Activated CD4-positive, alpha-beta T cell treated with anti-CD3 and anti-CD28 coated beads, Interleukin-2, amount 10 ng/mL, durations not matched to agents 24 days and 14 days (primary cell): ENCODE measurements at regions of chr13 and their contacts with region 1.

Region 1: GRCh38 chr13:52652196-52652979 is at the start of gene SUGT1:
- DNase-seq: peak; percentile 98
- H3K4me3 Mint-ChIP-seq: no peak within 1 kb of the TSS
- H3K27ac Mint-ChIP-seq: no peak within 1 kb of the TSS
- H3K4me1 Mint-ChIP-seq: peaks cover 15% of the 10 kb centered on the region
- H3K27me3 Mint-ChIP-seq: no peaks in the 10 kb centered on the region
- total RNA-seq, gene SUGT1: 71.2 and 77.8 TPM in 2 replicates

Region 2: DNA sequence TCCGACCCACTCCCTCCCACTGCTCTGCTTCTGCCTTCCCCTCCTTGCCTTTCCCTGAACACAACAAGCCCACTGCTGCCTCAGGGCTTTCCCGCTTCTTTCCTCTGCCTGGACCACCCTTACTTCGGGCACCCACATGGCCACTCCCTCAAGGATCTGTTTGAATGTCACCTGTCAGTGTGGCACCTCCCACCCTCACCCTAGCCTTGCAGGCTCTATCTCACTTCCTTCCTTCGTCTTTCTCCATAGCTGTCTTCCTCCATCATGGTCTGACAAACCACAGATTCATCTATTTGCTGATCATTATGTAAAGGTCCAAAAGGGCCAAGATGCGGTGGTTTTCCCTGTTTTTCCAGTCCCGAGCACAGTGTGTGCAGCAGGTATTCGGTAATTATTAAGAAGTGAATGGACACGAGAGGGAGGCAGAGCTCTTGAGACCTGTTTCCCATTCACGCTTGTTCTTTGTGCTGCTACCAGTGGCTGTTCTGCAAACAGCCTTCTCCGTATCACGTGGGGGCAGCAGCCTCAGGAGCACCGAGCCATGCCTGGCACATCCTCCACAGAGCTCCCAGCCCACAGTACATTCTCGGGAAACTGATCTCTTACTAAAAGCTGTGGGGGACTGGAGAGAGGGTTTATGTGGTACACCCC is 740.4 kb before region 1 on chr13:
- intact Hi-C with region 1: no loop called
- DNase-seq: no peak
- H3K4me3 Mint-ChIP-seq: no peak overlapping the region
- H3K27ac Mint-ChIP-seq: no peak overlapping the region
- H3K4me1 Mint-ChIP-seq: peaks cover 28% of the 10 kb centered on the region
- H3K27me3 Mint-ChIP-seq: peaks cover 3% of the 10 kb centered on the region

Region 3: GRCh38 chr13:52011632-52012511 is 640.5 kb before region 1 on chr13 and contains the start of gene ALG11:
- intact Hi-C with region 1: loop called (anchors 5 kb)
- DNase-seq: peak; percentile 100
- H3K4me3 Mint-ChIP-seq: peak within 1 kb of the TSS; percentile 99
- H3K27ac Mint-ChIP-seq: peak within 1 kb of the TSS; percentile 93
- H3K4me1 Mint-ChIP-seq: peaks cover 8% of the 10 kb centered on the region
- H3K27me3 Mint-ChIP-seq: peaks cover 34% of the 10 kb centered on the region
- total RNA-seq, gene ALG11: 26.7 and 28.0 TPM in 2 replicates

Region 4: GRCh38 chr13:52411629-52412028 is 240.8 kb before region 1 on chr13:
- intact Hi-C with region 1: no loop called
- DNase-seq: no peak
- H3K4me3 Mint-ChIP-seq: no peak overlapping the region
- H3K27ac Mint-ChIP-seq: no peak overlapping the region
- H3K4me1 Mint-ChIP-seq: peaks cover 2% of the 10 kb centered on the region
- H3K27me3 Mint-ChIP-seq: no peaks in the 10 kb centered on the region

Region 5: DNA sequence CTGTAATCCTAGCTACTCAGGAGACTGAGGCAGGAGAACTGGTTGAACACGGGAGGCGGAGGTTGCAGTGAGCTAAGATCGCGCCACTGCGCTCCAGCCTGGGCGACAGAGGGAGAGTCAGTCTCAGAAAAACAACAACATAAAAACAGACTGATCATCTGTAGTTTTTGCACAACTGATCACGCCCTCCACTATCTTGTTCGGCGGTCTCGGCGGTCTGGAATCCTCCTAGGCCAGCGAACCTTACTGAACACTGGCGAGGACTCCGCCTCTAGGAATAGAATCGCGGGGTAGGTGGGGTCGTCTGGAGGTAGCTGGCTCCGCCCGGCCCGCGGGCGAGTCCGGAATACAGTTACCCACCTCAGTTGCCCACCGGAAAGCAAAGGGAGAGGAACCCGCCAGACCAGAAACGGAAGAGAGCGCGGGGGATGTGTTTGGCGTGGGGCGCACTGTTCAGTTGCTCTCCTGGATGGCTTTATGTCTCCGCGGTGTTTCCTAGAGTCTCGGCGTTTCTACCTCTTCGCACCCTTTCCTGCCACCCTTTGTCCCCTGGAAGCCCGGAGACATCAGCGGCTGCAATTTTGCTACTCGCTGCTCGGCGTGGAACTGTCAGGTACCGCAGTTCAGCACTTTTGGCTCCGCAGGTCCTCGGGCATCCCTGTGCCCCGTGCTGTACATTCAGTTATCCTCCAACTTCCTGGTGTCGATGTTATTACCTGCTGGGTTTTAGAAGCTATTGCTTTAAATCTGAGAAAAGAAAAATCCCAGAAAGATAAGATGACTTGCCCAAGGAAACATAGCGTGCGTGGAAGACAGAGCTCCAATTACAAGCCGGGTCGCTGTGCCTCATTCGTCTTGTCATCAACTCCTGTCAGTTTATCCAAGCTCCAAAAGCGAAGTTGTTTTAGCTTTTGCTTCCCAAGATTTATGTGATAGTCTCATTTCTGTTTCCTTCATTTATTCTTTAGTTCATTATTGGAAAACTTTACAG is 35.0 kb before region 1 on chr13:
- intact Hi-C with region 1: loop called (anchors 1 kb)
- DNase-seq: peak; percentile 95
- H3K4me3 Mint-ChIP-seq: peak overlapping the region; percentile 94
- H3K27ac Mint-ChIP-seq: peak overlapping the region; percentile 94
- H3K4me1 Mint-ChIP-seq: peaks cover 14% of the 10 kb centered on the region
- H3K27me3 Mint-ChIP-seq: peaks cover 9% of the 10 kb centered on the region

Region 6: DNA sequence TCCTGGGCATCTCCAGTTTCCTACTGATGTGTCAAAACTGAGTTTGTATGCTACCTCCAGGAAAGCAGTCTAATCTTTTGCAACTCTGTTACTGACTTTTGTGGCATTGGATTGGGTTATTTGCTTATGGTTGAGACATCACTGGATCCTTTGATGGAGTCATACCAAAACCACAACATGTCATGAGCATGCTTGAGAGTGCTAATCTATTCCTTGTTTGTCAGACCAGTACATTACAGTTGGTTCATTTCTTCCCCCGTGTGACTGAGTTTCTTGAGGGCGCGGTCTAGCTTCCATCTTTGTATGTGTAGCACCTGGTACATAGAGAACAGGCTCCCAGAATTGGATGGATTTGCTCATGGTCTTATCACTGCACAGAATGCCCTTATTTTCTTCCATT is 43.5 kb after region 1 on chr13:
- intact Hi-C with region 1: loop called (anchors 1 kb)
- DNase-seq: peak; percentile 70
- H3K4me3 Mint-ChIP-seq: no peak overlapping the region
- H3K27ac Mint-ChIP-seq: peak overlapping the region; percentile 78
- H3K4me1 Mint-ChIP-seq: peaks cover 13% of the 10 kb centered on the region
- H3K27me3 Mint-ChIP-seq: no peaks in the 10 kb centered on the region

Region 7: GRCh38 chr13:52809310-52809769 is 157.0 kb after region 1 on chr13:
- intact Hi-C with region 1: loop called (anchors 5 kb)
- DNase-seq: peak; percentile 82
- H3K4me3 Mint-ChIP-seq: no peak overlapping the region
- H3K27ac Mint-ChIP-seq: no peak overlapping the region
- H3K4me1 Mint-ChIP-seq: peaks cover 4% of the 10 kb centered on the region
- H3K27me3 Mint-ChIP-seq: peaks cover 2% of the 10 kb centered on the region

Region 8: DNA sequence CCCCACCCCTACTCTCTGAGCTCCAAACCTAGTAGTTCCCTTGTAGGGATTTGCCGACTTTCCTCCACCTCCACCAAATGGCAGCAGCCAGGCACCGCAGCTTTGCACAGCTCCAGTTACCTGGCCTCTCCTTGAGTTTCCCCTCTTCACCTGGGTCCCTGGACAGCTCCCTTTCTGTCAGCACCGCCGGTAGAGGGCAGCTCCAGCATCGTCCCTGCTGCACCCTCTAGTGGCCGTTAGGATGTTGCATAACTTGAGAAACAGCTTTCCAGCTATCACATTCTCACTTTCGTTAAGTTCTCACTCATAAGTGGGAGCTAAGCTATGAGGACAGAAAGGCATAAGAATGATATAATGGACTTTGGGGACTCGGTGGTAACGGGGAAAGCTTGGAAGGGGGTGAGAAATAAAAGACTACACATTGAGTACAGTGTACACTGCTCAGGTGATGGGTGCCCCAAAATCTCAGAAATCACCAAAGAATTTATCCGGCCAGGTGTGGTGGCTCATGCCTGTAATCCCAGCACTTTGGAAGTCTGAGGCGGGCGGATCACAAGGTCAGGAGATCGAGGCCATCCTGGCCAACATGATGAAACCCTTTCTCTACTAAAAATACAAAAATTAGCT is 315.8 kb after region 1 on chr13:
- intact Hi-C with region 1: loop called (anchors 5 kb)
- DNase-seq: peak; percentile 87
- H3K4me3 Mint-ChIP-seq: no peak overlapping the region
- H3K27ac Mint-ChIP-seq: no peak overlapping the region
- H3K4me1 Mint-ChIP-seq: no peaks in the 10 kb centered on the region
- H3K27me3 Mint-ChIP-seq: peaks cover 3% of the 10 kb centered on the region